Astrocyte of the cerebellum (primary cell): ENCODE measurements at regions of chr5 and their contacts with region 1.

Region 1: GRCh38 chr5:73233347-73234200 is 60.6 kb downstream of the TMEM174 start:
- DNase-seq: no peak
- H3K4me3 ChIP-seq: peak overlapping the region; percentile 15
- CTCF ChIP-seq: no peak

Region 2: GRCh38 chr5:72920690-72921502 is 312.7 kb before region 1 on chr5:
- in situ Hi-C with region 1: loop called (anchors 10 kb)
- DNase-seq: peak; percentile 29
- H3K4me3 ChIP-seq: no peak overlapping the region
- CTCF ChIP-seq: no peak

Region 3: DNA sequence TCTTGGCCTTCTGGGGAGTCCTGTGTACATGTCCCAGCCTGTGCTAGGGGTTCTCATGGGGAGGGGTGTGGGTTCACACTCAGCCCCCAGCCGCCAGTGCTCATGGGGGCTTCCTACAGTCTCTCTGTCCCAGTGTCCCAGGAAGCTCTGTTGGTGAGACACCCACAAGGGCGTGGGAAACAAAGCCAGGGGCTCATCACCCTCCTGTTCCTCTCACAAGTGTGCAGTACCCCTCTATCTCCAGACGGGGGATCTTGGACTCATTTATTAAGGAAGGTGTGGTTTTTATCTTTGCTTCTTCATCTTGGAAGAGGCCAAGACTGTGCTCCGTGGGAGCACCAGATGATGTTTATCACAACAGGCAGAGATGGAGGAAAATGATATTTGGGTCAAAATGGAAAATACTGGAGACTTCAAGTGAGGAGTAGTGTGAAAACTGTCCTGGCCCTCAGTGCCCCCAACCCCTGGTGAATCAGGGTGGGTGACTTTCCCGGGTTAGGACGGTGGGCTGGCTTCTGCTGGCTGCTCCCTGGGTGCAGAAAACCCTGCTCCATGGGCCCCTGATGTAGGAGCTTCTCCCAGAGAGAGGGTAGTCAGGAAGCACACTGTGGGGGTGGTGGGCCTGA is 98.0 kb before region 1 on chr5:
- in situ Hi-C with region 1: no loop called
- DNase-seq: no peak
- H3K4me3 ChIP-seq: no peak overlapping the region
- CTCF ChIP-seq: peak; percentile 56

Region 4: DNA sequence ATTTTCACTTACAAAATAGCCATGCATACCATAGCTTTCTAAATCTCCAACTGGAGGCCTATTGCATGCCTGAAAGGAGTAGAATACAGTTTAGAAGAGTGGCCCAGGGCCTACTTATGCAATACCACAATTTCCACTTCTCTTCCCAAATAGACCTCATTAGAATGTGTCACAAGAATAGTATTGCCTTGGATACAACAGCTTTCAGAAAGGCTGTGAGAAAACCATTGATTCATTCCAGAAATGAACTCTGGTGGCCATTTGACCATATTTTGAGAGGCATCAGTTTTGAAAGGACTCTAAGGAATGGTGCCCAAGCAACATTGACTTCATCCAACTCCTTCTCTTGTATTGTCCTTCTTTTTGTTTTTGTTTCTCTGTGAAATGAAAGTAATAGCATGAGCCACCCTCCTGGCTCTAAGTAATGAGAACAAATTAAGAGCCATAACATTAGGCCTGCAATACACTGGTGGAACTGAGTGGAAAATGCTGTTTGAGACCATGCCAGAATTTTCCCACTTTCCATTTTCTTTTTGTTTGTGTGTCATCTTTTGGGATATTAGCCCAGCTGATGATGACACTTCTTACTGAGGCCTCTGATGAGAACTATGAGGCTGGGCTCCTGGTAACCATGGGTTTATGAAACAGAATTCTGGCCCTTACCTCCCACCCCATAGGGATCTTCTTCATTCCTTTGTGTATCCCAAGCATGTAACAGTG is 29.6 kb after region 1 on chr5:
- in situ Hi-C with region 1: no loop called
- DNase-seq: no peak
- H3K4me3 ChIP-seq: no peak overlapping the region
- CTCF ChIP-seq: no peak

Region 5: DNA sequence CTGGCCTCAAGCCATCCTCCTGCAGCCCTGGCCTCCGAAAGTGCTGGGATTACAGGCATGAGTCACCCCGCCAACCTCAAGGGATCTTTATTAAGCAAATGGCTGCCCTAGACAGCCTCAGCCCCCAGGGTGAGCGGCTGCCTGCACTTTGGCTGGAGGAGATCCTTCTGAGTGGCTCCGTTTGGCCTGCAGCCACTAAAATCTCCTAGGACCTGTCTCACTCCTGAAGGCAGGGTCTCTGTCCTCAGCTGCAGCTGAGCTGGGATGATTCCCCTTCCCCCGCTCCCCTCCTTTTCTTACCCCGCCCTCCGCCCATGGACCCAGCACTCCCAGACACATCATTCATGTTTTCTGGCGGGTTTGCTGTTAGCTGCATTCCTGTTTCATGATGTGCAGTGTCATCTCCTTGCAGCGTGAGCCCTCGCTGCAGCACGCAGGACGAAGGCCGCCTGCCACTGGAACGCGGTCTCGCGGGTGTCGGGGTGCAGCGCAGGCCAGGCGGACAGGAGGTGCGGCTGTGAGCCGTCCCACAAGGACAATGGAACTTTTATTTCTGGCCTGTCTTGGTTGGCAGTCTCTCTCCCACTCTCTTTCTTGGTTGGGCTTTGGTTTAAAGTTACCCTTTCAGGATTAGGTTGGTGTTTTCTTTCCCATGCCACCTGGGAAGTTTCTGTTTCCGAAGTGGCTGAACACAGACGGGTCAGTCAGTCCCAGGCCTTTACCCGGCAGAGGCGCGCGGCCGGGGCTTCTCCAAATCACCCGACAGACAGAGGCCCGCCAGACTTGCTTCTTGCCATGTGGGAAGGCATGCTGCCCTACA is 77.9 kb after region 1 on chr5:
- in situ Hi-C with region 1: no loop called
- DNase-seq: peak; percentile 68
- H3K4me3 ChIP-seq: no peak overlapping the region
- CTCF ChIP-seq: peak; percentile 1

Region 6: DNA sequence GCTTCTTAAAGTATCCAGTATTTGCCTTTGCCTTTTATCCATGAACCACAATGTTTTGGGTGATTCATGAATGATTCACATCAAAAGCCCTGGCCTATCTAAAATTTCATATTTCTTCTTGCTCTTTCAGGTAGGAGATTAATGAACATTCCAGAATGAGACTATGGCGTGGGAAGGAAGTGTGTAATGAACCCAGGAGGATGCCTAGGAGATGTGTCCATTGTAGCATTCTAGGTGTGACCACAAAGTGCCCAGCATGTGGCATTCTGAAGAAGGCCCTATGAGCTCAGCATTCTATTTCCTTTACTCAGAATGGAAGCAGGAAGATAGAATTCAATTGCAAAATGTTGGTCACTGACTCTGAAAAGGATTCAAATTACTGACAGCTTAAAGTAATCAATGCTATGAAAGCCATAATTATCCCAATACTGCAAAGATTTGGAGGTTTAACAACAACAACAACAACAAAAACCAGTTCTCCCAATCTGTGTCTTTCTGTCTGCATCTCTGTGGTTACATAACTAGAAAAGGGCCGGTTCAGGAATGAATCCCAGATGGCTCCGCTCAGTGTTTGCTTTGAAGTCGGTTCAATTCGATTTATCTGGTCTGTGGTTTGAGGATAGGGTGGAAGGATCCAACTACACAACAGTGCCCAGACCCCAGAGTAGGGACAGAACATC is 88.3 kb after region 1 on chr5:
- in situ Hi-C with region 1: loop called (anchors 5 kb)
- DNase-seq: peak; percentile 97
- H3K4me3 ChIP-seq: no peak overlapping the region
- CTCF ChIP-seq: no peak

Region 7: GRCh38 chr5:73419465-73420390 is 186.2 kb after region 1 on chr5:
- in situ Hi-C with region 1: loop called (anchors 10 kb)
- DNase-seq: peak; percentile 91
- H3K4me3 ChIP-seq: peak overlapping the region; percentile 14
- CTCF ChIP-seq: no peak